PC-3 (cell line): ENCODE measurements at regions of chr18 and their contacts with region 1.

Region 1: DNA sequence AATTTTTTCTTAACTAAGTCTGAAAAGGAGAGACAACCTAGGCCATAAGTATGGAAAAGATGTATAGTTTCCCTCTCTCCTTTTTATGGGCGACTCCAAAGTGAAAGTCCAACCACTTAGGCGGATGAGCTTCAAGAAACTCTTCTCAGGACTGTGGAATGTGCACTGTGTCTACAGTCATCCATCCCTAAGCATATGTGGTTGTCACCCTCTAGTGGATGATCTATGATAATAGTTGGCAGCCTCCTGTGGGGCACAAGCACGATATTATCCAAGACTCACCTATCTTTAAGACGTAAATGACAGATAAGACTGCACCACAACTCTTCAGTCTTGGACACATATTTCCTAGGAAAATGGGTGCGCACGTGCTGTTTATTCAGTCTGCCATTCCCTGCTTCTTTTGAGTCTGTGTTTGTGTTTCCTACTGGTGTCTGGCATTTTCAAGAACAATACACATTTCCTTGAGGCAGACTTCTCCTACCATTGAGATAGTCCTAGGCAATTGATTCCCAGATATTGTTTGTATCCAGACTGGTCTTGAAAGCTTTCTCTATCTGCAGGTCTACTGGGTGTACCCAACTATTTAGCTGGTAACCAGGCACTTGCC is 145.5 kb upstream of the CTAGE1 start:
- DNase-seq: peak; percentile 93
- ATAC-seq: peak; percentile 73
- H3K4me3 ChIP-seq: peak overlapping the region; percentile 29; the same call in 1 of the 2 replicates
- H3K27ac ChIP-seq: peak overlapping the region; percentile 16; the same call in 1 of the 2 replicates
- H3K4me1 ChIP-seq: peaks cover 25% of the 10 kb centered on the region
- H3K27me3 ChIP-seq: no peaks in the 10 kb centered on the region
- CTCF ChIP-seq: peak; percentile 90

Region 2: DNA sequence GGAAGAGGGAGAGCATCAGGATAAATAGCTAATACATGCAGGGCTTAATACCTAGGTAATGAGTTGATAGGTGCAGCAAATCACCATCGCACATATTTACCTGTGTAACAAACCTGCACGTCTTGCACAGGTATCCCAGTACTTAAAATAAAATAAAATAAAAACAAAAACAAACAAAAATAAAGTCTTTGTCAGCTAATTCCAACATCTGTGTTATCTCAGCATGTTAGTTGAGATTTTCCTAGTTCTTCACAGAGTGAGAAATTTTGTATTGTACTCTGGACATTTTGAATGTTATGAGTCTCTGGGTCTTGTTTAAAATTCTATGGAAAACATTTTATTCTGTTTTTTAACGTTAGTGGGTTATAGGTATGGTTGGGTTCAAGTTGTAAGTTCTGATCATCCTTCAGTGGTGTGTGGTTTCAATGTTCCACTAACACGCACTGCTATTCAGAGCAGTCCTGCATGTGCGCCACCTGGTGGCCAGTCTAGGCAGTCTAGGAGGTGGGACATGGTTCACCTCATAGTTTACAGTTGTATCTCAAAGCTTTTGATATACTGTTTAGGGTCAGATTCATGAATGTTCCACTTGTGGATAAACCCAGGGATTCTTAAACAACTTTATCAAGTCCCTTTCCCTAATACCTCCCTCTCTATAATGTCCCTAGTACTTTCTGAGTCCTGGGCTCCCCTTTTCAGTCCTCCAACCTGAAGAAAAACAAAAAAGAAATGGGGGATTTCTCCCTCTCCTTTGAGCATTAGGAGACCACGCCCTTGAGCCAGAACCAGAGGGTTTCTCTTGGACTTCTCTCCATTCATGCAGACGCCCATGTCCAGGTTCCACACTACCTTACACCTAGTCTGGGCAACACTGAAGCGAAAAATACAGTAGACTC is 607.2 kb before region 1 on chr18:
- CTCF ChIA-PET with region 1: no interaction called
- POLR2A ChIA-PET with region 1: no interaction called
- intact Hi-C with region 1: loop called (anchors 5 kb)
- DNase-seq: peak; percentile 81
- ATAC-seq: peak; percentile 99
- H3K4me3 ChIP-seq: no peak overlapping the region
- H3K27ac ChIP-seq: no peak overlapping the region
- H3K4me1 ChIP-seq: no peaks in the 10 kb centered on the region
- H3K27me3 ChIP-seq: no peaks in the 10 kb centered on the region
- CTCF ChIP-seq: peak; percentile 95

Region 3: GRCh38 chr18:22169007-22169864 is 394.0 kb before region 1 on chr18 and contains the start of gene GATA6:
- CTCF ChIA-PET with region 1: no interaction called
- POLR2A ChIA-PET with region 1: no interaction called
- intact Hi-C with region 1: loop called (anchors 1 kb)
- DNase-seq: peak; percentile 91
- ATAC-seq: peak; percentile 79
- H3K4me3 ChIP-seq: peak within 1 kb of the TSS; percentile 100
- H3K27ac ChIP-seq: peak within 1 kb of the TSS; percentile 80
- H3K4me1 ChIP-seq: peaks cover 13% of the 10 kb centered on the region
- H3K27me3 ChIP-seq: peaks cover 6% of the 10 kb centered on the region
- CTCF ChIP-seq: peak; percentile 55; the same call in 1 of the 2 replicates
- total RNA-seq, gene GATA6: 19.4 and 24.1 TPM in 2 replicates

Region 4: DNA sequence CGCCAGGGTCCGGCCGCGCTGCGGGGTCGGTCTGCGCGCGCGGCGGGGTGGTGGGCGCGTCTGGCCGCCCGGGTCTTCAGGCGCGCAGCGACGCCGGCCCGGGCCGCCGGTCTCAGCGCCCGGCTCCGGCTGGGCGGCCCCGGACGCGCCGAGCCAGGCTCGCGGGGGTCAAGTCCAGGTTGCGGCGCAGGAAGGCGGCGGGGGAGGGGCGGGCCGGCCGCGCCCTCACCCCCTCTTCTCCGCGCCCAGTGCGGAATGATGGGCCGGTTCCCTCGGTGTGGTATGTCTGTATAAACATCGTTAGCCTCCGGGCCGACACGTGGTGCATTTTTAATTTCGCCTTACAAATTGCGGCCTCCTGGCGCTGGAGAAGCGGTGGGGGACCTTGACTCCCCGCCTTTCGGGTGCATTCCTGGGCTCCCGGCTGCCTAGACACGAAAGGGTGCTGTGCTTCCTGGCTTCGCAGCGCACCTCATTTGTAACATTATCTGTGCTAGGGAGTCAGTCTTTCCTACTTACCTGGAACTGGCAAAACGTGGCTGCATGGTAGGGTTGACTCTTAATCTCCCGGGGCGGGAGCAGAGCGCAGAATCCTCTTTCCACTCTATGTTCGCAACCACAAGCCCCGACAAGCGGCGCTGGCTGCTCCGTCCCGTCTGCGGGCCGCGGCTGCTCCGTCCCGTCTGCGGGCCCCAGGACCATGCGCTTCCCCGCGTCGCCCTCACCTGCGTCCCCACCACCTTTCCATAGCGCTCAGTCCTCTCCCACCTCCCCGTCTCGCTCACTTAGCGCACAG is 214.5 kb before region 1 on chr18:
- CTCF ChIA-PET with region 1: no interaction called
- POLR2A ChIA-PET with region 1: no interaction called
- intact Hi-C with region 1: loop called (anchors 5 kb)
- DNase-seq: peak; percentile 77
- ATAC-seq: peak; percentile 70
- H3K4me3 ChIP-seq: peak overlapping the region; percentile 65
- H3K27ac ChIP-seq: peak overlapping the region; percentile 62
- H3K4me1 ChIP-seq: peaks cover 67% of the 10 kb centered on the region
- H3K27me3 ChIP-seq: no peaks in the 10 kb centered on the region
- CTCF ChIP-seq: no peak

Region 5: DNA sequence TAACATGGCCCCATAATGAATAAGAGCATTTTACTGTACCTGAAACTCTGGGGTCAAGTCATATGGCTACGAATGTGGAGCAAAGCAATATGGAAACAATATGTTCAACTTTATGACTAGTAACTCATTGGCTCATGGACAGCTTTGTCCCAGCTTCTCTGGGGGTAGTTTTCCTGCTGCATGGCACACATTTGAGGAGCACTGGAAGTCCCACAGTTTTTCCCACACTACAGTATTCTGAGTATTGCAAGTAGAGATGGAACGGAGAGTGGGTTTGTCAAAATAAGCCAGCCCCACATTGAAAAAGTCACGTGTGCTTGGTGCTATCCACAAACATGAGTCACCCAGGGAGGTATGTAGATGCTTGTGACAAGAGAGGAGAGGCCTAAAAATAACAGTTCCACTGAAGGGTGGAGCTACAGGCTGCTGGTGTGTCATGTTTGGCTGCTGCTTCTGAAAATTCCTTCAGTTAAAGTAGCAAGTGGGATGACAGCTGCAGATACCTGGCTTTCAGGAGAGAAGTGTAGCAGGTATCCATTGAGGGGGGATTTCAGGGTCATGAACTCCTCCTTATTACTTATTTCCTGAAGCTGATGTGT is 97.2 kb before region 1 on chr18:
- CTCF ChIA-PET with region 1: interaction called, 3 read pairs
- POLR2A ChIA-PET with region 1: interaction called, 3 read pairs
- intact Hi-C with region 1: loop called (anchors 1 kb)
- DNase-seq: peak; percentile 94
- ATAC-seq: peak; percentile 67
- H3K4me3 ChIP-seq: peak overlapping the region; percentile 57
- H3K27ac ChIP-seq: peak overlapping the region; percentile 98
- H3K4me1 ChIP-seq: peaks cover 56% of the 10 kb centered on the region
- H3K27me3 ChIP-seq: no peaks in the 10 kb centered on the region
- CTCF ChIP-seq: no peak

Region 6: DNA sequence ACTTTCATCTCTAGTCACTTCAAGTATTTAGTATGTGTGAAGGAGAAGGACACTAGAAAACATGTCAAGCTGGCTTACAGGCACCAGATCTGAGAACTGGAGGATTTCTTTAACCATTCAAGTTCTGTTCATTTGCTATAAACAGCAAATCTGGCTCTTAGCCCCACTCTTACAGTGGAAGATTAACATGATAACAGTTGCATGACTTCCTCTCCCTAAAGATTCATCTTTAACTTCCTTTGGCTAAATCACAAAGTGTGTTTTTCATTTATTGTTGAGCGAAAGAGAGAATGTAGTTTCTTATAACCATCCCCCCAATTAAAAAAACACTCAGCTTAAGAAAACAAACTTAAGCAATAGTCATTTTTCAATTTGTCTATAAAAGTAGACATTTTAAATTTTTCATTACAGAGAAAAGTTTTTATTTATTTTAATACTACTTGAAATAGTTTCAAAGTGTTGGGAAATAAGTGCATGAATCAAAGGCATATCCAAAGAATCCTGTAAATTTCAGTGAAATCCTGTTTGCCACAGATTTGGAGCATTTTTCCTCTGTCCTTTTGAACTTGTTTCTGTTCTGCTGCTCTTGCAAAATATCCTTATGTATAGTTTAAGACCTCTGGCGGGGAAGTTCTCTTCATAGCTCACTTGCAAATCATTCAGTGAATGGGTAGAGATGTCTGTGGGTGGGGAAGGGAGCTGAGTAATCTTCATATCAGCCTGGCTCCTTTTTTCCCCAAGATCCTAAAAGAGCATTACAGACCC is 128.9 kb after region 1 on chr18:
- CTCF ChIA-PET with region 1: no interaction called
- POLR2A ChIA-PET with region 1: no interaction called
- intact Hi-C with region 1: no loop called
- DNase-seq: no peak
- ATAC-seq: no peak
- H3K4me3 ChIP-seq: no peak overlapping the region
- H3K27ac ChIP-seq: no peak overlapping the region
- H3K4me1 ChIP-seq: peaks cover 24% of the 10 kb centered on the region
- H3K27me3 ChIP-seq: no peaks in the 10 kb centered on the region
- CTCF ChIP-seq: no peak

Region 7: DNA sequence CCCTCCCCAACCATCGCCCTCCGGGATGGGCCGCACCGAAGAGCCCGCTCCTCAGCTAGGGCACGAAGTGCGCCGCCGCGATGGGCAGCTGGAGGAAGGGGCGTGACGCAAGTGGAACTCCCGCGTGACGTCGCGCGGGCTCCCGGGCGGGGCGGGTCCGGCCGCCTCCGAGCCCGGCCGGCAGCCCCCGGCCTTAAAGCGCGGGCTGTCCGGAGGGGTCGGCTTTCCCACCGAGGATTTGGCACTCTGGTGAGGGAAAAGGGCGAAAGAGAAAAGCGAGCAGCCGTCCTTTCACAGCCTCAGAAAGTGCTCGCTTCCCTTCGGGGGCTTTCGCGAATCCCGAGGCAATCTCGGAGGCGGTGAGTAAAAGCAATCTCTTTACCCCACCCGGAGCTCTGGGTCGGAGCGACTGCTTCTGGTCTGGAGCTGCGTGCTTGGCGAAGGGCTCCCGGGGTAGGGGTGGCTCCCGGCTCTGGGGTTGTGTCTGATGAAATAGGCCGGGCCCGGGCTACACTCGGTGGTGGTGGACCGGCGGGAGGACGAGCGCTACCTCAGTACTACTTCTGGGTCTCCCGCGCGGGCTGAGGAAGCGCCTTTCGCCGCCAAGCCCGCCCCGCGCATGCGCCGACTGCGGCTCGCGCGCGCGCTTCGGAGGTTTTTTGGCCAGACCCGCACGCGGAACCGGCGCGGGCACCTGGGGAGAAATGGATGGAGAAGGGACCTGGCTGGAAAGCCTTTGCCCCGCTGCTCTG is 370.2 kb after region 1 on chr18 and contains the start of gene RBBP8:
- CTCF ChIA-PET with region 1: no interaction called
- POLR2A ChIA-PET with region 1: no interaction called
- intact Hi-C with region 1: no loop called
- DNase-seq: peak; percentile 83
- ATAC-seq: peak; percentile 85
- H3K4me3 ChIP-seq: peak within 1 kb of the TSS; percentile 77
- H3K27ac ChIP-seq: peak within 1 kb of the TSS; percentile 83
- H3K4me1 ChIP-seq: peaks cover 9% of the 10 kb centered on the region
- H3K27me3 ChIP-seq: no peaks in the 10 kb centered on the region
- CTCF ChIP-seq: no peak
- total RNA-seq, gene RBBP8: 31.9 and 41.1 TPM in 2 replicates

Region 8: GRCh38 chr18:23183411-23184155 is 620.4 kb after region 1 on chr18:
- CTCF ChIA-PET with region 1: no interaction called
- POLR2A ChIA-PET with region 1: no interaction called
- intact Hi-C with region 1: no loop called
- DNase-seq: no peak
- ATAC-seq: no peak
- H3K4me3 ChIP-seq: no peak overlapping the region
- H3K27ac ChIP-seq: no peak overlapping the region
- H3K4me1 ChIP-seq: no peaks in the 10 kb centered on the region
- H3K27me3 ChIP-seq: no peaks in the 10 kb centered on the region
- CTCF ChIP-seq: no peak